ENCODE measurements at regions of chr20 and their contacts with region 1.

Region 1: GRCh38 chr20:62382306-62383198 is 4.4 kb upstream of the RPS21 start:
- DNase-seq: peak; percentile 86
- CTCF ChIP-seq: peak; percentile 98

Region 2: DNA sequence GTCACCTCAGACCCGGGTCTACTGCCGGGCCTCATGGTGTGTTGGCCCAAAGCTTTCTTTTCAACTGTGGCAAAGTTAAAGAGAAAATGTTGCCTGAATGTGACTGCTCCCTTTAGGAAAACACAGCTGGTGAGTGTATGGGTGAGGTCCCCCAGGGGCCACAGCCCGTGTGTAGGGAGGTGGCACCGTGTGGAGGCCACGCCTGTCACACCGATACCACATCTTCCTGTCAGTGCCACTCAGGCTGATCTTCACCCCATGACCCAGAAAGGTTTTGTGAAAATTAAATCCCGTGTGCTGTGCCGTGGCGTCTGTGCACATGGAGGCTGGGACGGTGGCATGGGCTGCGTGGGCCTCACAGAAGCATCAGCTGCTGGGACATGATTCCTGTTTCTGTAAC is 90.4 kb before region 1 on chr20:
- in situ Hi-C with region 1: no loop called
- DNase-seq: no peak
- CTCF ChIP-seq: no peak

Region 3: DNA sequence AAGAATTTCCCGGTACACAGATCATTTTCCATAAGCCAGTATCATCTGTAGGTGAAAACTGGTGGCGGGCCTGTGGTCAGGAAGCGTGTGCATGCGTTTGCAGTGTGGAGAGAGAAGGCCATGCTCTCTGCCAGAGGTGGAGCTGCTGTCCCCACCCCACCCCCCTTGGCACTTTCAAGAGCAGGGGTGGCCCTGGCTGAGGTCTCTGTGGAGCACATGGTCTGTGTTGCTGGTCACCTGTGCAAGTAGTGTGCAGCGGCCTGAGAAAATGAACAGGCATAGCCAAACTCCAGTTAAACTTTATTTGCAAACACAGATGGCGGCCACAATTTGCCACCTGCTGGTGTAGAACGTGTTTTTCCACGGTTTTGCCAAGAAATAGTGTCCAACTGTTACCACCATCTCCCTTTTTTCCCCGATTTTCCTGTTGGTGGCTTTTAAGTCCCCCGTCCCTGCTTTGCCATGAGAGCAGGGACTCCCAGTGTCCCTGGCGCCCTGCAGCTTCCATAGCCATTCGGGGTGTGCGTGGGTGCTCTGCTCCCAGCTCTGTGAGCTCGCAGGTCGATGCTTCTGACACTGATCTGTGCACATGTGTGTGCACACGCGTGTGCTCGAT is 77.3 kb before region 1 on chr20:
- in situ Hi-C with region 1: loop called (anchors 5 kb)
- DNase-seq: no peak
- CTCF ChIP-seq: no peak